ENCODE measurements at regions of chr3 and their contacts with region 1.

Region 1: DNA sequence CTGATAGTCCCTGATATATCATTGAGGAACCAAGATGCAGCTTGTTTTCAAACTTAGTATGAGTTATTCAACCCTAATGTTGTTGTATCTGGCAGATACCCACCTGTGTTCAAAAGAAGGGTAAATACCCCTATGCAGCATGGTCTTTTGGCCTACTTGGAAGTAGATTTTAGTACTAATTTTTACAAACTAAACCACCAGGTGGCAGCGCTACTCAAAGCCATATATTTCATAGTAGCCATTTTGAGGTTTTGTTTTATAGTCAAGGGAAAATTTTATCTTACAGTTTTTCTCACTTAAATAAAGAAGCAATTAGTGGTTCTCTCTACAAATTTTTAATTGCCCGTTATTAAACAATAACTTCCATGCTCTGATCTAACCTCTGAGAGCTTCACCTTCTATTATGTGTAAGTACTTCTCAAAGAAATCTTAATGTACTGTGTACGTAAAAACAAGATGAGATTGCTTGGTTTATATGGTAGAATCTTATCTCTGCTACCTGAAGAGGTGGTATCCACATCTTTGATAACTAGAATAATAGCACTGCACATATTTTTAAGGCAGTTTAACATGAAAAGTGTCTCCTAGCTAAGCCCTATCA is 31.5 kb upstream of the MLF1 start:
- DNase-seq: no peak
- ATAC-seq: no peak
- H3K4me3 ChIP-seq: no peak overlapping the region
- H3K27ac ChIP-seq: no peak overlapping the region
- H3K4me1 ChIP-seq: no peaks in the 10 kb centered on the region
- H3K27me3 ChIP-seq: no peaks in the 10 kb centered on the region
- CTCF ChIP-seq: peak; percentile 21 to 56 (median 36)
- POLR2A ChIP-seq: no peak

Region 2: GRCh38 chr3:157606011-157606851 is 933.3 kb before region 1 on chr3:
- in situ Hi-C with region 1: loop called in 2 of 4 experiments (anchors 25 kb)
- intact Hi-C with region 1: no loop called
- DNase-seq: peak; percentile 10 to 28
- ATAC-seq: no peak
- H3K4me3 ChIP-seq: peak overlapping the region in 1 of 4 donors; percentile 11
- H3K27ac ChIP-seq: no peak overlapping the region
- H3K4me1 ChIP-seq: no peaks in the 10 kb centered on the region
- H3K27me3 ChIP-seq: no peaks in the 10 kb centered on the region
- CTCF ChIP-seq: peak; percentile 35 to 75 (median 57)
- POLR2A ChIP-seq: no peak

Region 3: GRCh38 chr3:157876556-157876955 is 663.0 kb before region 1 on chr3:
- in situ Hi-C with region 1: no loop called
- intact Hi-C with region 1: no loop called
- DNase-seq: no peak
- ATAC-seq: no peak
- H3K4me3 ChIP-seq: no peak overlapping the region
- H3K27ac ChIP-seq: no peak overlapping the region
- H3K4me1 ChIP-seq: peaks cover 0 to 8% of the 10 kb centered on the region in 2 donors
- H3K27me3 ChIP-seq: no peaks in the 10 kb centered on the region
- CTCF ChIP-seq: no peak
- POLR2A ChIP-seq: no peak

Region 4: GRCh38 chr3:158465074-158465473 is 74.4 kb before region 1 on chr3:
- in situ Hi-C with region 1: no loop called
- intact Hi-C with region 1: no loop called
- DNase-seq: no peak
- ATAC-seq: no peak
- H3K4me3 ChIP-seq: no peak overlapping the region
- H3K27ac ChIP-seq: no peak overlapping the region
- H3K4me1 ChIP-seq: no peaks in the 10 kb centered on the region
- H3K27me3 ChIP-seq: no peaks in the 10 kb centered on the region
- CTCF ChIP-seq: no peak
- POLR2A ChIP-seq: no peak

Region 5: GRCh38 chr3:158483701-158484235 is 55.7 kb before region 1 on chr3:
- in situ Hi-C with region 1: no loop called
- intact Hi-C with region 1: no loop called
- DNase-seq: no peak
- ATAC-seq: no peak
- H3K4me3 ChIP-seq: no peak overlapping the region
- H3K27ac ChIP-seq: no peak overlapping the region
- H3K4me1 ChIP-seq: no peaks in the 10 kb centered on the region
- H3K27me3 ChIP-seq: no peaks in the 10 kb centered on the region
- CTCF ChIP-seq: no peak
- POLR2A ChIP-seq: no peak